ENCODE measurements at regions of chr20 and their contacts with region 1.

Region 1: DNA sequence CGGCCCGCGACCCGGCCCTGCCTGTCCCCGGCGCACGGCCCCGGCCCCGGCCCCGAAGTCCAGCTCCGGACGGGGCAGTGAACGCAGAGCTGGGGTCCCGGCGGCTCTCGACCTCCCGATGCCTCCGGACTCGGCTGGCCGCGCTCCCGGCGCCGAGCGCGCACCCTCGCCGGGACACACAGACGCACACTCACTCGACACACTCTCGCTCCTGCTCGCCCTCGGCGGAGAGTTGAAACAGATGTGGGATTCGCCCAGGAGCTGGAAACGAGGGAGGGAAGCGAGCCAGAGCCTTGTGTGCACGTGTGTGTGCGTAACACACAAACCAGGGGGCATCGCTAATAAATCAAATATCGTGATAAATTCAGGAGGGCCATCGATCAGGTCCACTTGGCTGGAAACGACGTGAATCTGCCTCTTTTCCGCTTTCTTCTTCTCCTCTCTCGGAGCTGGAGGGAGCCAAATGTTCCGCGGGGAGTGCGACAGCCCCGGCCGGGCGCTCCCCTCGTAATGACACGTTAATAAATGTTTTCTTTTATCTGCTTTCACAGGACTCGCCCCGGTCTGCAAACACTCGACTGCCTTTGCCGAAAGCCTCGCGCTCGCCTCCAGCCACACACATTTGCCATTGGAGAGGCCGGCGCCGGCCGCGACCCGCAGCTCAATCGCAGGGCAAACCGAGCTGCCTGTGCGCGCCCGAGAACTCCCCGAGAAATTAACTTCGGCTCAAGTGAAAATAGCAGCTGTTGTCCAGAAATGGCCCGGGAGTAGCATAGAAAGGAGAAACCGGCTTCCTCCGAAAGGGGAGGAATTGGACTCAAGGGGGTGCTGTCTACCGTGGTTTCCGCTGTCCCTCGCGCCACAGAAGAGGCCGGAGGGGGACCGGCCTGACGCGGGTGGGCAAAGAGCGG is 828 bp upstream of the SULF2 start:
- DNase-seq: no peak
- H3K4me3 ChIP-seq: peak overlapping the region; percentile 59
- H3K27me3 ChIP-seq: peaks cover 10% of the 10 kb centered on the region
- CTCF ChIP-seq: peak; percentile 80

Region 2: DNA sequence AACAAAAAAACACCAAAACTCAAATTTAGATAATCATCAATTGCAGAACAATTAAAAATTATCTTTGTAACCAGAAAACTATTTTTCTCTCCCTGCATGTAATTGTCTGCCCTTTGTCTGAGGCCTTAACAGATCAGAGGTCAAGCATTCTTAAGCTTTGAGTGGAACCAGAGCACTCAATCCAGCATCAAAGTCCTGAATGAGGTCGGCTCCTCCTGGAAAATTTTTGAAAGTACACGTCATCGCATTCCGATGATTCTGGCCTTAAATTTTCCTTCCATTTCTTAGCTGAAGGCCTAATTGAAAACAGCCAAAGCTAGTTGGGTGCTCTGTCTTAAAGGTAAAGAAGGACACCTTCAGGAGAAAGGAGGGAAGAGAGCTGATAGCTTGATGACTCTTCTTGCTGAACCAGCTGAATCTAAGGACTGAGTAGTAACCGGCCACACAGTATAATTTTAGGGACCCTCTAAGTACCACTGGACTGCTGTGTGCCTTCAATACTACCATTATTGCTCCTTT is 509.4 kb after region 1 on chr20:
- CTCF ChIA-PET with region 1: interaction called, 40 read pairs
- POLR2A ChIA-PET with region 1: interaction called, 5 read pairs
- DNase-seq: peak; percentile 90
- H3K4me3 ChIP-seq: no peak overlapping the region
- H3K27me3 ChIP-seq: no peaks in the 10 kb centered on the region
- CTCF ChIP-seq: peak; percentile 50

Measured in BJ (cell line).